ENCODE measurements at regions of chr21 and their contacts with region 1.

Region 1: DNA sequence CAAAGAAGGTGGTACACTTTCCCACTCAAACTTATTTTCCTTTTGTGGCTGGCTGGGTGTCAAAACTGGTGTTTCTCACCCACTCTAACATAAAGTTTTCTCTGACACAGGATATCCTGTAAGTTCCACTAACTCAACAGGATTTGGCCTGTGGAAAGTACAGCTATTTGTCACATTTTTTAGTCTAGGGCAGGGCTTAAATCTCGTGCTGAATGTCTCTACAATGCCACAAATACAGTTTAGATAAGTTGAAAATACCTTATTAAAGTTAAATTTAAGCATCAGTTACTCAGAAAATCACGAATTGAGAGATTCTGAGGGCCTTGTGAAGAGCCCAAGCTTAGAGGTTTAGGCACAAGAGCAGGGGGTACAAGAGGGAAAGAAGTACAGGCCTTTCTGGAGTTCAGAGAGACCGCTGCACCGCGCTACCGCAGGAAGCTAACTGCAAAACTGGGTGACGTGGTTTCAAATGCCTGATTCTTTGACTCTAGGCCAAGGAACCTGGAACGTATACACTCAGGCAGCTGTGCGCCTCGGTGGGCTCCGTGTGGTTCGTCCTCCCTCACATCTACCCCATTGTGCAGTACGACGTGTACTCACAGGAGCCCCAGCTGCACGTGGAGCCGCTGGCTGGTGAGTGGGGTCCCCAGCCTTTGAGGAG is 23.4 kb upstream of the PWP2 start:
- DNase-seq: peak; percentile 81
- H3K4me3 Mint-ChIP-seq: peak overlapping the region; percentile 79
- H3K27ac Mint-ChIP-seq: peak overlapping the region; percentile 99
- H3K4me1 Mint-ChIP-seq: peaks cover 96% of the 10 kb centered on the region
- H3K27me3 Mint-ChIP-seq: no peaks in the 10 kb centered on the region

Region 2: GRCh38 chr21:43916691-43917514 is 166.9 kb before region 1 on chr21:
- CTCF ChIA-PET with region 1: no interaction called
- DNase-seq: peak; percentile 85
- H3K4me3 Mint-ChIP-seq: peak overlapping the region; percentile 74
- H3K27ac Mint-ChIP-seq: peak overlapping the region; percentile 90
- H3K4me1 Mint-ChIP-seq: peaks cover 68% of the 10 kb centered on the region
- H3K27me3 Mint-ChIP-seq: peaks cover 5% of the 10 kb centered on the region

Region 3: DNA sequence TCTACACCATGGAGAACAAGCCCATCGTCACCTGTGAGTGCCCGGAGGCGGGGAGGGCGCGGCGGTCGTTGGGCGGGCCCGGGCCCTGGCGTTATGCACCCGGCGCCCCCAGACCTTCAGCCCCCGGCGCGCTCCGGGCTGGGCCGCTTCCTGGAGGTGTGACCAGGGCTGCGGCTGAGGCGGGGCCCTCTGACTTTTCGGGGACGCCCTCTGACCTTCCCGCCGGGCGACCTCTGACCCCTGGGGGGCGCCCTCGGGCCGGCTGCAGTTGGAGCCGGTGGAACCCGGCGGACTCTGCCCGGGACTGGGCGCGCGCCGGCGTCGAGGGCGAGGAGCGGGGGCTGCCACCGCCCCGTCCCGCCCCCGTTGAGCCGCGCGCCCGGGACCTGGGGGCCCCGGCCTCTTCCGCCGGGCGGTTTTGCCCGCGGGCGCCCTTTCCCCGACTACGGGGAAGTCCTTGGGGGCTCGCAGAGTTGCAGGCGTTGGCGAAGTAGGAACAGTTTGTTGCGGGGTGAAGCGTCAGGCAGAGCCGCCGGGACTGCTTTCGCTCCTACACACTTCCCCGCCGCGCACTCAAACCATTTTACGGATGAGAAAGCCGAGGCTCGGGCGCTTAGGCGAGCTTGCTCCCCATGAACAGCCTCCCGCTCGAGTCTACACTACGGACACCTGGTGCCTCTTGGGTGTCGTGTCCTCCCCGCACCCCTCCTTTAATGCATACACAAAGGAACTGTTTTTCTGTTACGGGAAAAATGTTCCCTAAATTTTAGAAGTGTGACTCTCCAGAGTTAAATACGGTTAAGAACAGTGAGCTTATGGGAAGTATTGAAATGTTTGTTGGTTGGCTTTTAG is 71.0 kb before region 1 on chr21:
- CTCF ChIA-PET with region 1: interaction called, 13 read pairs
- DNase-seq: peak; percentile 91
- H3K4me3 Mint-ChIP-seq: peak overlapping the region; percentile 93
- H3K27ac Mint-ChIP-seq: peak overlapping the region; percentile 97
- H3K4me1 Mint-ChIP-seq: peaks cover 53% of the 10 kb centered on the region
- H3K27me3 Mint-ChIP-seq: no peaks in the 10 kb centered on the region